ENCODE measurements at regions of chr21 and their contacts with region 1.

Region 1: DNA sequence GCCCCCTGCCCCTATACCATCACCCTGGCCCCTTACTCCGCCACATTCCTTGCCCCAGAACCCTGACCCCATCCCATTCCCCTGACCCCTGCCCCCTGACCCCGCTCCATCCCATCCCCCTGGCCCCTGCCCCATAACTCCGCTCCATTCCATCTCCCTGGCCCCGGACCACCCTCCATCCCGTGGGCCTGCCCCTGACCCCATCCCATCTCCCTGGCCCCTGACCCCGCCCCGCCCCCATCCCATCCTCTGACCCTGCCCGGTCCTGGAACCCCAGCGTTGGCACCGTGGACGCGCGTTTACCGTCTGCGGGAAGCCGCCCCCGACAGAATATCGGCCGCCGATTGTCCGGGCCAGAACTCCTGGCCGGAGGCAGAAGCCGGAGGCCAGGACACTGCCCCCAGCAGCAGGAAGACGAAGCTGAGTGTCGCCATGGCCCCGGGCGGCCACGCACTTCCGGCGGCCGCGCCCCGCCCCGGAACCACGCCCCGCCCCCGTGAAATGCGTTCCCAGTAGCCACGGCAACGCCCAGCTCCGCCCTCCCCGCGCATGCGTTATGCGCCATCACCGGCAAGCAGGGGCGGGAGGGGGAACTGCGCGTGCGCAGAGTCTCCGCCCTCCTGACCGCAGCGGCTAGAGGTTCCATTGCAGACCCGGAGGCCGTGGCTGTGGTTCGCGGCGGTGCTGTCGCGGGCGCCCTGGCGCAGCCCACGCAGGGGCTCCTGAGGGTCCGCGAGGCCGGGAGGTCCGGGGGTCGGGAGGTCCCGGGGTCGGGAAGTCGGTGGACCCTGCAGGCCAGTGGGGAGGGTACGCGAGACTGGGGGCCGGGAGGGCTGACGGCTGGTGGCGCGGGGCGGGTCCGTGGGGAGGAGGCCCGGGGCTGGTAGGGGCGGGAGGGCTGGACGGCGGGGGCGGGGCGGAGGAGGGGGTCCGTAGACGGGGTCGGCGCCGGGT is at the start of gene POFUT2:
- DNase-seq: peak; percentile 99
- ATAC-seq: peak; percentile 85
- H3K4me3 Mint-ChIP-seq: peak within 1 kb of the TSS; percentile 88
- H3K27ac Mint-ChIP-seq: peak within 1 kb of the TSS; percentile 87
- H3K4me1 Mint-ChIP-seq: peaks cover 19% of the 10 kb centered on the region
- H3K27me3 Mint-ChIP-seq: no peaks in the 10 kb centered on the region
- CTCF ChIP-seq: no peak
- total RNA-seq, gene POFUT2: 19.3 and 21.4 TPM in 2 replicates

Region 2: GRCh38 chr21:44939532-44940115 is 348.1 kb before region 1 on chr21 and contains the start of gene SLX9:
- CTCF ChIA-PET with region 1: no interaction called
- POLR2A ChIA-PET with region 1: no interaction called
- intact Hi-C with region 1: loop called (anchors 10 kb)
- DNase-seq: peak; percentile 80
- ATAC-seq: peak; percentile 92
- H3K4me3 Mint-ChIP-seq: peak within 1 kb of the TSS; percentile 88
- H3K27ac Mint-ChIP-seq: peak within 1 kb of the TSS; percentile 84
- H3K4me1 Mint-ChIP-seq: peaks cover 42% of the 10 kb centered on the region
- H3K27me3 Mint-ChIP-seq: no peaks in the 10 kb centered on the region
- CTCF ChIP-seq: no peak
- total RNA-seq, gene SLX9: 26.0 and 34.7 TPM in 2 replicates

Region 3: GRCh38 chr21:45319461-45320211 is 31.9 kb after region 1 on chr21:
- CTCF ChIA-PET with region 1: no interaction called
- POLR2A ChIA-PET with region 1: interaction called, 12 read pairs
- intact Hi-C with region 1: no loop called
- DNase-seq: no peak
- ATAC-seq: no peak
- H3K4me3 Mint-ChIP-seq: no peak overlapping the region
- H3K27ac Mint-ChIP-seq: no peak overlapping the region
- H3K4me1 Mint-ChIP-seq: peaks cover 10% of the 10 kb centered on the region
- H3K27me3 Mint-ChIP-seq: peaks cover 22% of the 10 kb centered on the region
- CTCF ChIP-seq: no peak

Region 4: DNA sequence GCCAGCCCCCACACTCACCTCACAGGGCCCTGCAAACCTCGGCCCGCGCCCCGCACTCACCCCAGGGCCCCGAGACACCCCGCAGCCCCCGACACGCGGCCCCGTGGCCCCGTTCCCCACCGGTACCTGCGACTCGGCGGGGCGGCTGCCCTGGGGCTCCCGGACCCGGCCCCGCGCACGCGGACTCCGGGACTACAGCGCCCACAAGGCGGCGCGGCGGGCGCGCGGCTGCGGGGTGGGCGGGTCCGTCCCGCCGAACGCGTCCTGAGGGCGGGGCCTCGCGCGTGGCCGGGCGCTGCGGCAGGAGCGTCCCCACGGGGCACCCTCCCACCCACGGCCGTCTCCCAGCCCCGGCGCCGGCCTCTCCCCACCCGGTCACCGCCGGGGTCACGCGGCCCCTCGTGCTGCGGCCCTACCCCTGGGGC is 254.5 kb after region 1 on chr21 and contains the start of gene SLC19A1:
- CTCF ChIA-PET with region 1: no interaction called
- POLR2A ChIA-PET with region 1: no interaction called
- intact Hi-C with region 1: loop called (anchors 5 kb)
- DNase-seq: peak; percentile 81
- ATAC-seq: peak; percentile 94
- H3K4me3 Mint-ChIP-seq: peak within 1 kb of the TSS; percentile 77
- H3K27ac Mint-ChIP-seq: no peak within 1 kb of the TSS
- H3K4me1 Mint-ChIP-seq: peaks cover 4% of the 10 kb centered on the region
- H3K27me3 Mint-ChIP-seq: no peaks in the 10 kb centered on the region
- CTCF ChIP-seq: no peak
- total RNA-seq, gene SLC19A1: 7.4 and 10.7 TPM in 2 replicates

Region 5: GRCh38 chr21:45596704-45597318 is 309.1 kb after region 1 on chr21:
- CTCF ChIA-PET with region 1: interaction called, 11 read pairs
- POLR2A ChIA-PET with region 1: no interaction called
- intact Hi-C with region 1: loop called (anchors 1 kb)
- DNase-seq: peak; percentile 74
- ATAC-seq: peak; percentile 82
- H3K4me3 Mint-ChIP-seq: no peak overlapping the region
- H3K27ac Mint-ChIP-seq: no peak overlapping the region
- H3K4me1 Mint-ChIP-seq: peaks cover 10% of the 10 kb centered on the region
- H3K27me3 Mint-ChIP-seq: peaks cover 13% of the 10 kb centered on the region
- CTCF ChIP-seq: no peak

Region 6: DNA sequence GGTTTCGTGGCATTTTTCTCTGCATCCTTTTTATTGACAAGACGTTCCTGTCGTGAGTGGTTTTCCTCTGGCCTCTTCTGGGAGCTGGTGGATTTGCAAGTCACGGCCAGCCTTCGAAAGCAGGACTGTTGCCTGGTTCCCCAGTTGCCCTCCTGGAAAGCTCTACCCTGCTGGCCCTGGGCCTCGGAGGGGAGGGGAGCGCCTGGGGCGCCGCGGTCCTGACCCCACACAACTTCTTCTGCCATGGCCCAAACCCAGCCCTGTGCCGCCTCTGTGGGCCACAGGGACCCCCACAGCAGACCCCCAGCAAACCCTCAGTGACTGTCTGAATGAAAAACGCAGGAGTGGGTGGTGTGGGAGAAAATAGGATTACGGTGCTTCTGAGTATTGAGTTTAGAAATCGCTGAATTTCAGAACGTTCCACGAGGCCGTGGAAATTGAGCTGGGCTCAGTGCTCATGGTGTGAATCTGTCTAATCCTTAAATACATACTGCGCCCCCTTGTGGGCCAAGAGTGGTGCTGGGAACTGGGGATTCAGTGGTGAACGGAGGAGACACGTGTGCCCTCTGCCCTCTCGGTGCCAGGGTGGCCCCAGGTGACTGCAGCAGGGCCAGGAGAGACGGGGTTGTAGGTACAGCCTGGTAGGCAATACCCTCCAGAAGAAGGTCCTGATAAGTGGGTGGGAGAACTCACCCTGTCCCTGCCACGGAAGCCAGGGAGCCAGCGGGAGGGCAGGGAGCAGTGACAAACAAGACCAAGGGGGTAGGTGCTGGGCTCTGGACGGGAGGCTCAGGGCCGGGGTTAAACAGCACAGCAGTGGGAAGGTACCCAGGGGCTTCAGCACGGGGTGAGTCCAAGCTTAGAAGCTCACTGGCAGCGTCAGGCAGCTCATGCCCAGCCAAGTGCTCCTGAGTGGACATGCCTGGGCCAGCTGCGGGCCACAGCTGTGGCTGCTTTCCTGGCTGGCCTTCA is 592.7 kb after region 1 on chr21:
- CTCF ChIA-PET with region 1: no interaction called
- POLR2A ChIA-PET with region 1: no interaction called
- intact Hi-C with region 1: loop called (anchors 1 kb)
- DNase-seq: no peak
- ATAC-seq: peak; percentile 66
- H3K4me3 Mint-ChIP-seq: no peak overlapping the region
- H3K27ac Mint-ChIP-seq: no peak overlapping the region
- H3K4me1 Mint-ChIP-seq: peaks cover 5% of the 10 kb centered on the region
- H3K27me3 Mint-ChIP-seq: peaks cover 4% of the 10 kb centered on the region
- CTCF ChIP-seq: no peak

Measured in activated B cell treated with CpG ODN at 0.5 μM for 24 hours (primary cell).